Motor neuron (in vitro differentiated cells): ENCODE measurements at regions of chr1 and their contacts with region 1.

Region 1: DNA sequence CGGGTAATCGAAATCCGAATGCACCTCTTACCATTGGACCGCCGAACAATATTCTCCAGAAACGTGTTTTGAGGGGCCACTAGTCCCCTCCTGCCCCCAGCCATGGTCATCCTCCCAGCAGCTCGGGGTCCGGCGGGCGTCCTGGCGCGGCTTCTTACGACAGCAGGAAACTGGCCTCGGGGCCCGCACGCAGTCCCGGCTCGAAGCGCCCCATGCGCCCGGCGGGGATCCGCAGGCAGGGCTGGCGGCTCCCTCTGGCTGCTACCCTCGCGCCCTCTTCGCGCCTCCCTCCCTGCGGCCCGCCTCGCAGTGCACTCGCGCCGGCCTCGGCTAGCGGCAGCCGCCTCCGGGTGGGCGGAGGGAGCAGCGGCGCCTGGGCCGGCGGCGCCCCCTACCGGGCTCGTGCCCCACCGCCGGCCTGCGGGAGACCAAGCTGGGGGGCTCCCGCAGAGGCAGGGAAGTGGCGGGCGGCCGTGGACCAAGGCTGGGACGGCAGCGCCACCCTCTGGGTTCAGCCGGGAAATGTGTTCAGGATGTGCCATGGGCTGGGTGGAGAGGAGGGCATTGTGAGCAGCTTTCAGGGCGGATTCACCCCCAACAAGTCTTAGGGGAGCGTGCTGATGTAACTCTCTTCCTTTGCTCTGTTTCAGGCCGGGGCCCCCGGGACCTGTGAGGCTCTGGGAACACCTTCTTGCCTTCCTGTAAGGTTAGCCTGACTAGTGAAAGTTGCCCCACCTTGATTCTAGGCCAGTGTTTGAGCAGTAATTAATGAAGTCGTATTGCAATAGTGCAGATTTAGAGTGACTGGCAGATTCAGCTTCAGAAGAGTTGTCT is at the start of gene KCNH1:
- ATAC-seq: peak; percentile 92 to 98 (median 96)
- H3K4me3 ChIP-seq: peak within 1 kb of the TSS; percentile 38 to 50 (median 43)
- H3K27ac ChIP-seq: peak within 1 kb of the TSS in 1 of 2 donors; percentile 24
- H3K4me1 ChIP-seq: peaks cover 5 to 7% of the 10 kb centered on the region in 2 donors
- total RNA-seq, gene KCNH1: 1.2 to 22.5 (median 6.2) TPM

Region 2: DNA sequence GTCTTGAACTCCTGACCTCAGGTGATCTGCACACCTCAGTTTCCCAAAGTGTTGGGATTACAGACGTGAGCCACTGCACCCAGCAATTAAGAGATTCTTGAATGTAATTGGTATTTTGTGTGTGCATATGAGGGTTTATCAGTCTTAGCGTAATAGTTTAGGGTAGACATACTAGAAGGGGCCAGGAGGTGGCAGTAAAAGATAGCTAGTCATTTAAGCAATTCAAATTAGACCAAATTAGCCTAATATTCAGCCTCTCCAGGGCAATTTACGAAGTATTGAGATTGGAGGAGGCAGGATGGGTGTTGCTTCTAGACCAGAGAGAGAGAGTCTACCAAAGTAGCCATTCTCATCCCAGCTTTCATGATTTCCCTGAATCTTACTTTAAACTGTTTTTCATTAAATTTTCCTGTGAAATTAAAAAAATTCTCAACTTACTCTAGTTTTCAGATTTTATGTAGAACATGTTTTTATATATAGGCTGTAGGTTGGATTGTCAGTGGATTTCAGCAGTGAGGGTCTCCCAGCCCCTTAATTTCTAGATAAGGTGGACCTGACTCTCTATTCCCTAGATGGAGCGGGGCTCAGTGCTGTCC is 685.7 kb before region 1 on chr1:
- in situ Hi-C with region 1: loop called in 1 of 9 experiments (anchors 10 kb)
- ATAC-seq: peak; percentile 43 to 89 (median 70)
- H3K4me3 ChIP-seq: no peak overlapping the region
- H3K27ac ChIP-seq: no peak overlapping the region
- H3K4me1 ChIP-seq: no peaks in the 10 kb centered on the region

Region 3: GRCh38 chr1:210571356-210572284 is 562.4 kb before region 1 on chr1:
- in situ Hi-C with region 1: loop called in 8 of 9 experiments (anchors 10 to 25 kb)
- ATAC-seq: peak in 2 of 8 experiments; percentile 56 to 61
- H3K4me3 ChIP-seq: no peak overlapping the region
- H3K27ac ChIP-seq: no peak overlapping the region
- H3K4me1 ChIP-seq: peaks cover 5 to 26% of the 10 kb centered on the region in 2 donors

Region 4: DNA sequence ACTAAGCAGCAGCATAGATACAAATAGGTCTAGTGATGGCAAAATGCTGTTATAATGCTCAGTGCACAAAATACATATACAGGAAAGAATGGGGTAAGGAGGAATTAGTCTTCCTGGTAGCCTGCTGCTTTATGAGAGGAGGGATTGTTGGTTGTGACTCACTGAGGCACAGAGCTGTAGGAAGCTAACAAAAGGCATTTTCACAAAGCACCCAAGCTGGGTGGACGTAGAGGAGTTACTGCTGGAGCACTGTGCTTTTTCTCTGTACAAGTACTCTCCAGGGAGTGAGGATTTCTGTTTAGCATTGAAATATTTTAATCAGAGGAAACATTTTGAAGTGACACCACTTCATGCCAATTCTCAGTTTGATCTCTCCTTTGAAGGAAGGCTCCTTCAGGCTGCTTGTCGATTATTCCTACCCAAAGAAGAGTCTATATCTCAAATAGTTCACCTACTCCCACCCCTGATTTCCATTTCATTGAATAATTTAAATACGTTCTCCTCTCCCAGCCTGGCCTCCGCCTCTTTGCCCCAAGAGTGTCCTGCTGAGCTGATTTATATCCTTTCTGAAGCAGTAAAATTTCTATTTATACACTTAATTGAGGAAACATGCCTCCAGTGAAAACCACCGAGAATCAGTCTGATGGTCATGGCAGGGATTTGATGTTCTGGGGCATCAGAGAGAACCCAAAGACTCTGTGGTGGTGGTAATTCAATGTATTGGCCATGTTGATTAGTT is 533.5 kb before region 1 on chr1:
- in situ Hi-C with region 1: loop called in 6 of 9 experiments (anchors 10 to 25 kb)
- ATAC-seq: peak in 6 of 8 experiments; percentile 45 to 66 (median 56)
- H3K4me3 ChIP-seq: no peak overlapping the region
- H3K27ac ChIP-seq: no peak overlapping the region
- H3K4me1 ChIP-seq: peaks cover 8 to 21% of the 10 kb centered on the region in 2 donors